ENCODE measurements at regions of chr19 and their contacts with region 1.

Region 1: DNA sequence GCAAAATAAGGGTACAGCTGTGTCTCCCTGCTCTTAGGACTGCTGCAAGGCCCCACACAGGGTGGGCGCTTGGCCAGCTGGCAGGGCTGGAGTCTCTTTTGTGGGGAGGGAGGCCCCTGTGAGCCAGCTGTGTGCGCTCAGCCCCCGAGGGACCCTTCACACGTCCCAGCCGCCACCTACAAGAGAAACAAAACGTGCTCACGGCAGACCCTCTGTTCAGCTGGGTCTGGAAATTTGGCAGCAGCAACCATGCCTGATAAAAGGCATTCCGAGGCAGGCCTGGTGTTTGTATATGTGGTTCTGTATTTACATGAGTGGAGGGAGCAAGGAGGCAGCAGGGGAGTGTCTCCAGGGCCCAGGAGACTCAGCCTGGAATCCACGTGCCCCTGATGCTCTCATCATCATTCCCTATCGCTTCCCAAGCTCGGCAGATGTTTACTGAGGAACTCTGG is 49.7 kb downstream of the CRTC1 start:
- DNase-seq: no peak

Region 2: GRCh38 chr19:18776736-18777135 is 43.5 kb after region 1 on chr19:
- intact Hi-C with region 1: loop called in 1 of 2 experiments (anchors 1 kb)
- DNase-seq: no peak

Measured in posterior vena cava (tissue), 2 donors.